Mammary epithelial cell (primary cell): ENCODE measurements at regions of chr12 and their contacts with region 1.

Region 1: DNA sequence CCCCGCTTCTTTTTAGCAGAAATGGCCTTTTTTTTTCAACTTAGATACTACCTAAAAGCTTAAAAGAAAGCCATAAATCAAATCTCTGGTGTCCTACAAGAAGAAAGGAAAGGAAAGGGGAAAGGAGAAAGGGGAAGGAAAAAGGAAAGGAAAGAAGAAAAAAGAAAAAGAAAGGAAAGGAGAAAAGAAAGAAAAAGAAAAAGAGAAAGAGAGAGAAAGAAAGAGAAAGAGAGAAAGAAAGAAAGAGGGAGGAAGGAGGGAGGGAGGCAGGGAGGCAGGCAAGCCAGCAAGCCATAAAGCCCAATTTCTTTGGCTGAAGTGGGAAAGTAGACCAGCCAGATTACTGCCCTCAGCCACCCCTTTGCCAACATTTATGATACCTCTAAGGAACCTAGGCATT is 32.5 kb upstream of the SLC6A13 start:
- DNase-seq: no peak
- H3K4me3 ChIP-seq: no peak overlapping the region
- H3K27ac ChIP-seq: no peak overlapping the region
- H3K4me1 ChIP-seq: no peaks in the 10 kb centered on the region
- H3K27me3 ChIP-seq: no peaks in the 10 kb centered on the region
- CTCF ChIP-seq: no peak

Region 2: GRCh38 chr12:247271-247670 is 47.9 kb before region 1 on chr12:
- CTCF ChIA-PET with region 1: no interaction called
- dilution Hi-C with region 1: loop called (anchors 5 kb)
- in situ Hi-C with region 1: no loop called
- intact Hi-C with region 1: no loop called
- DNase-seq: no peak
- H3K4me3 ChIP-seq: no peak overlapping the region
- H3K27ac ChIP-seq: no peak overlapping the region
- H3K4me1 ChIP-seq: no peaks in the 10 kb centered on the region
- H3K27me3 ChIP-seq: no peaks in the 10 kb centered on the region
- CTCF ChIP-seq: no peak